ENCODE measurements at regions of chr17 and their contacts with region 1.

Region 1: DNA sequence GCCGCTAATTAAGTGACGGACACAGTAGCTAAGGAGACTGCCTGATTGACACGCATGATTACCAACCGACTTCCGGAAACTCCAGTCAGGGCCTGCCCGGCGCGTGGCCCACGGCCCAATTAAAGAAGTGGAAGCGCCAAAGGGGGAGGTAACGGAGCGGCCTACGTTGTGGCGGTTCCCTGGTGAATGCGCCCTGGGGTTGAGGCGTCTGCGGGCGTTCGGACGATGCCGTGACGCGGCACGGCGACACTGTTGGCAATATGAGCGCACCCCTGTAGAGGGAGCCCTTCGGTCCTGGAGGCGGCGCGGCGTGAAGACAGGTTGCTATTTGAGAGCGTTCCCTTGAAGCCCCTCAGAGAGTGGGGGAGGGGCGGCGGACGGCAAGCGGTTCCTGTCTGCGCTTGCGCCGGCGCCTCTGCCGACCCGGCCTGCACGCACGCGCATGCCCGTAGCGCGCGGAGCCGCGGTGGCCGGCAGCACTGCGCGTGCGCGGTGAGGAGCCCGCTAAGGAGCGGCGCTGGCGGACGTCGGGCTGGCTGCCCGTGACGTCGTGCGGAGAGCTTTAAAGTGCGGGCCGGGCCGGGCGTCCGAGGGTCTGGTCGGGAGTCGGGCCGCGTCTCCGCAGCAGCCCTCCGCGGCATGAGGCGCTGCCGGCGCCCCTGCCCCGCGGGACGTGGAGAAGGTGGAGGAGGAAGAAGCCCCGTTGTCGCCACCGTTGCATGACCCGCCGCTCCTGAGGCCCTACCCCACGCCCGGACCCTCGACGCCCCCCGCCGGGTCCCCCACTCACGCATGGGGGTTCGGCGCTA is at the start of gene ALKBH5:
- DNase-seq: peak; percentile 99
- ATAC-seq: peak; percentile 93
- total RNA-seq, gene ALKBH5: 183 TPM

Region 2: GRCh38 chr17:18087610-18088491 is 95.7 kb before region 1 on chr17 and contains the start of gene DRG2:
- intact Hi-C with region 1: loop called (anchors 1 kb)
- DNase-seq: peak; percentile 95
- ATAC-seq: peak; percentile 97
- total RNA-seq, gene DRG2: 18.8 TPM

Region 3: GRCh38 chr17:18217412-18218015 is 34.0 kb after region 1 on chr17:
- intact Hi-C with region 1: loop called (anchors 5 kb)
- DNase-seq: peak; percentile 80
- ATAC-seq: peak; percentile 79